WTC11 (cell line): ENCODE measurements at regions of chr10 and their contacts with region 1.

Region 1: GRCh38 chr10:66390926-66391325 is 534.9 kb upstream of the LRRTM3 start:
- DNase-seq: no peak
- ATAC-seq: no peak
- H3K4me3 Mint-ChIP-seq: no peak overlapping the region
- H3K27ac Mint-ChIP-seq: no peak overlapping the region
- H3K4me1 Mint-ChIP-seq: peaks cover 30% of the 10 kb centered on the region
- H3K27me3 Mint-ChIP-seq: no peaks in the 10 kb centered on the region
- CTCF ChIP-seq: no peak

Region 2: DNA sequence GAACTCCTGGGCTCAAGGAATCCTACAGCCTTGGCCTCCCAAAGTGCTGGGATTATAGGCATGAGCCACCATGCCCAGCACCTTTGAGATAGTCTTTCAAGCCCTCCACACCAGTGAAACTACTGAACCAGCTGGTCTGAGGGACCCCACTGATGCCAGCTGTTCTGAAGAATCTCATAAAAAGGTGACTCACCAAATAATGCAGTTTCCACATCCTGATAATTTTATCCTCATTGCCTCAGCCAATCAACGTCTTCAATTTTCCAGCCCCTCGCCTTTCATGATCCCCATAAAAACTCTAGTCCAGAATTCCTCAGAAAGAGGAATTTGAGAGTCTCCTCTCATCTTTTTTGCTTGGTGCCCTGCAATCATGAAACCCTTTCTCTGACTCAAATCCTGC is 1156.7 kb before region 1 on chr10:
- CTCF ChIA-PET with region 1: no interaction called
- POLR2A ChIA-PET with region 1: interaction called, 13 read pairs
- DNase-seq: no peak
- ATAC-seq: no peak
- H3K4me3 Mint-ChIP-seq: no peak overlapping the region
- H3K27ac Mint-ChIP-seq: no peak overlapping the region
- H3K4me1 Mint-ChIP-seq: peaks cover 20% of the 10 kb centered on the region
- H3K27me3 Mint-ChIP-seq: no peaks in the 10 kb centered on the region
- CTCF ChIP-seq: no peak